ENCODE measurements at regions of chr18 and their contacts with region 1.

Region 1: GRCh38 chr18:45526114-45526841 is 89.0 kb upstream of the SLC14A2 start:
- DNase-seq: no peak
- H3K4me3 ChIP-seq: no peak overlapping the region
- H3K27ac ChIP-seq: no peak overlapping the region
- H3K4me1 ChIP-seq: no peaks in the 10 kb centered on the region
- H3K27me3 ChIP-seq: no peaks in the 10 kb centered on the region
- CTCF ChIP-seq: no peak
- POLR2A ChIP-seq: no peak

Region 2: GRCh38 chr18:45538444-45538843 is 12.2 kb after region 1 on chr18:
- intact Hi-C with region 1: loop called (anchors 1 kb)
- DNase-seq: no peak
- H3K4me3 ChIP-seq: no peak overlapping the region
- H3K27ac ChIP-seq: no peak overlapping the region
- H3K4me1 ChIP-seq: no peaks in the 10 kb centered on the region
- H3K27me3 ChIP-seq: no peaks in the 10 kb centered on the region
- CTCF ChIP-seq: no peak
- POLR2A ChIP-seq: no peak